AG04450 (cell line): ENCODE measurements at regions of chr11 and their contacts with region 1.

Region 1: DNA sequence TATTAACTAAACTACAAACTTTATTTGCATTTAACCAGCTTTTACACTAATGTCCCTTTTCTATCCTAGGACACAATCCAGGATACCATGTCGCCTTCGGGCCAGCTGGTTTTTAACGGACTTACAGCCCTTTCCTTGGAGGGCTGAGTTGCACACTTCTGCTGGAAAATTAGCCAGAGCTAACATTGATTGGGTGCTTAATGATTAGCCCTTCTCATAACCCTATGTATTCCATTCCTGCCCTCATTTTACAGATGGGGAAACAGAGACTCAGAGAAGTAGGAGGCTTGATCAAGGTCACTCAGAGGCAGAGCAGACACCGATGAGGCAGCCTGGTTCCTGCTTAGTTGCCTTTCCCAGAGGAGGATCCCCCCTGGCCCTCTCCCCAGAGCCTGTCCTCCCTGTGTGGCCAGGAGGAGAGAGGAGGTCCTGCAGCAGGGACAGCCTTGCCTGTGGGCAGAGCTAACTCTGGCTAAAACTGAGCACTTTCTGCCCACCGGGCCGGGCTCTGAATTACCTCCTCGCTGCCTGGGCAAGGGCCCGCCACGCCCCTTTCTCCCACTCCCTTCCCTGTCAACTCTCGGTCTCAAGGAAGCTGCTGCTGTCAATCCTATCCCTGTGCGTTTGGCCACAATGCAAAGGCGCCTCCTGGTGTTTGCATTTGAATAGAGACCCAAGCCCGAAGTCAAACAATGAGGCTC is 59.6 kb upstream of the PAX6 start:
- DNase-seq: peak; percentile 2
- H3K4me3 ChIP-seq: no peak overlapping the region
- H3K27ac ChIP-seq: no peak overlapping the region
- H3K27me3 ChIP-seq: peaks cover 15% of the 10 kb centered on the region
- CTCF ChIP-seq: peak; percentile 83

Region 2: DNA sequence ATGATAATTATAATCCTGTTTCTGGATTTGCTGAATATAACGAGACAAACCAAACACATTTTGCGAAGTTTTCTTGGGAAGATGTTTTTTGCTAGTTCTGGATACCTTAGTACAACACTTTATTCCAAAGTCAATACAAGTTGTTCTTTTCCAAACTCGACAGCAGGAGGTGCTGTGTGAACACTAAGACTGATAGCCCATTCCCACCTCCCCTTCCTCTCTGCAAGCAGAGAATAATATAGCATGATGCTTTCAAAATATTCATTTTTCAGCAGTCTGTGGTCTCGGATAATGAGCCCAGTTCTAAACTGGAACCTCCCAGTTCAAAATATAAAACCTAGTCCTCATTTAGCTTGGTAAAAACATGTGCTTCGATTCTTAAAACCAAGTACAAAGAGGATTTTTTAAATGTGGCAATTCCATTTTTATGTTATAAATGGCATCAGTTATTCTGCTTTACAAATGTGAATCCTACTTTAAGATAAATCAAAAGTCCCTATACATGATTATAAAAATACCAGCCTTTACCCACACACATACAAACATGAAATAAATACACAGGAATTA is 630.3 kb before region 1 on chr11:
- CTCF ChIA-PET with region 1: interaction called, 11 read pairs
- POLR2A ChIA-PET with region 1: no interaction called
- DNase-seq: peak; percentile 1
- H3K4me3 ChIP-seq: no peak overlapping the region
- H3K27ac ChIP-seq: no peak overlapping the region
- H3K27me3 ChIP-seq: no peaks in the 10 kb centered on the region
- CTCF ChIP-seq: peak; percentile 58

Region 3: GRCh38 chr11:31295308-31295707 is 575.5 kb before region 1 on chr11:
- CTCF ChIA-PET with region 1: no interaction called
- POLR2A ChIA-PET with region 1: interaction called, 11 read pairs
- DNase-seq: no peak
- H3K4me3 ChIP-seq: no peak overlapping the region
- H3K27ac ChIP-seq: no peak overlapping the region
- H3K27me3 ChIP-seq: no peaks in the 10 kb centered on the region
- CTCF ChIP-seq: no peak

Region 4: DNA sequence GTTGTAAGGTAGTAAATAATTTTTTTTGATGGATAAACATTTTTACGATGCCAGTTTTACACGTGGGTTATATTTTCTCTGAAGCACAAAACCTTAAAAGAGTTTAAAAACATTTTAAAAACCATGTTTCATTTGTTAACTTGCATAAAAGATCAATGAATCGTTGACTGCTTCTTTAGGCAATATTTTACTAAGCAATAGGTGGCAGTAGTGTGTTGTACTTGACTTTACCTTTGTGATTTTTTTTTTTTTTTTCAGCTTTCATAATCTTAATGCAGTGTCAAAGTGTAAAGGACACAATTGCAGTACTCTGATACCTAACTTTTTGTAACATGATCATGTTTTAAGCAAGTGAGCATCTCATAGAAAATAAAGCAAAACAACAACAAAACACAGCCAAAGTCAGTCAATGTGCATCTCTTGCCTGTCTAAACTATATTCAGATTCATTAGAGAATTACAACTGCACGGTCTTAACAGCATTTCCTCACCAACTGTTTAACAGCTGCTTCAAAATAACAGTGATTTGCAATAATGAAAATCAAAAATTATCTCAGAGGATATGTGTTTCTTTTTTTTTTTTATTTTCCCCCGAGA is 473.4 kb before region 1 on chr11:
- CTCF ChIA-PET with region 1: interaction called, 22 read pairs
- POLR2A ChIA-PET with region 1: no interaction called
- DNase-seq: no peak
- H3K4me3 ChIP-seq: no peak overlapping the region
- H3K27ac ChIP-seq: no peak overlapping the region
- H3K27me3 ChIP-seq: no peaks in the 10 kb centered on the region
- CTCF ChIP-seq: peak; percentile 67

Region 5: DNA sequence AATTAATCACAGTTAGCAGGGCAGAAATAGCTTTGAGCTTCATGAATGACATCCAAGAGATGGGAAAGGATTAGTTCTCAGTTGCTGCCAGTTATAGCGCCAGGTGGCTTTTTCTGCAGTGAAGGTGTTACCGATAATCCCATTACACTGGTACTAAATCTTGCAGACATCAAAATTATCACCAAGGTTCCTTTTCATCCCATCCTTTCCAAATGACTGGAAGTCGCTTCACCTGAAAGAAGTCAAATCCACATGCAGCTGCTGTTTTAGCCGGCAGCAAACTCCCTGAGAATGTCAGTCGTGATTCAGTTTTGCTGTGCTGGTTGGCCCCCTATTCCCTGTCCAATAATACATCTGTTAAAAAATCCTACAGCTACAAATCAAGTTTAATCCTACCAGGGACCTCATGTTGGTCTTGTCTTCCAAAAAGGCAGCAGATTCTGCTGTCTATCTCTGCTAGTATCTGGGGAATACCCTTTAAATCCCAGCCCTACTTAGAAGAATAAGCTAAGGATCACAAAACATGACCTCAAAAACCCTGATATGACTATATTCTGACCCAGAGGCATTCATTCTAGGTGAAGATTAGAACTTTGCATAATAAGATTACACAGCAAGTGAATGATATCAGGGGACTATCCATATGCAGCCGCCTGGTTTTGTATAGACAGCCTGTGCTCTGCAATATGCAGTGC is 393.1 kb before region 1 on chr11:
- CTCF ChIA-PET with region 1: interaction called, 12 read pairs
- POLR2A ChIA-PET with region 1: no interaction called
- DNase-seq: no peak
- H3K4me3 ChIP-seq: no peak overlapping the region
- H3K27ac ChIP-seq: no peak overlapping the region
- H3K27me3 ChIP-seq: no peaks in the 10 kb centered on the region
- CTCF ChIP-seq: no peak

Region 6: DNA sequence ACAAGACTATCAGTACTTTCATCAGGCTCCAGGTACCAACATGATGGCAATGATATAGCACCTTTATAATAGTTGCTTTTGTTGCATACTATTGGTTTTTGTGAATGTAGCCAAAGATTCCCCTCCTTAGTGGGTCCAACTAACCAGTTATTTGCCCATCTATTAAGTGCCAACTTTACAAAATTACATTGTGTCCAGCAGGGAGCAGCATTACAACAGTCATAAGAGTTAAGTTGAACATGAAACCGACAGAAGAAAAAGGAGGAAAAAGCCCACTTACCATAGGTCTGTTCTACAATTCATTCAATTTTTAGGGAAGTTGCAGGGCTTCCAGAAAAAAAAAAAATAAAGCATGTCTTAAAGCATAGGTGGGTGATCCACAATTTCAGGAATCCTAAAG is 382.9 kb before region 1 on chr11:
- CTCF ChIA-PET with region 1: interaction called, 32 read pairs
- POLR2A ChIA-PET with region 1: no interaction called
- DNase-seq: peak; percentile 27
- H3K4me3 ChIP-seq: no peak overlapping the region
- H3K27ac ChIP-seq: no peak overlapping the region
- H3K27me3 ChIP-seq: no peaks in the 10 kb centered on the region
- CTCF ChIP-seq: peak; percentile 61

Region 7: GRCh38 chr11:31641477-31642062 is 229.2 kb before region 1 on chr11:
- CTCF ChIA-PET with region 1: interaction called, 26 read pairs
- POLR2A ChIA-PET with region 1: no interaction called
- DNase-seq: no peak
- H3K4me3 ChIP-seq: no peak overlapping the region
- H3K27ac ChIP-seq: no peak overlapping the region
- H3K27me3 ChIP-seq: no peaks in the 10 kb centered on the region
- CTCF ChIP-seq: peak; percentile 72